ENCODE measurements at regions of chr17 and their contacts with region 1.

Region 1: GRCh38 chr17:73255671-73256181 is 6.0 kb downstream of the CPSF4L start:
- DNase-seq: peak; percentile 51
- H3K4me3 ChIP-seq: no peak overlapping the region
- H3K27ac ChIP-seq: no peak overlapping the region
- H3K4me1 ChIP-seq: no peaks in the 10 kb centered on the region
- H3K27me3 ChIP-seq: no peaks in the 10 kb centered on the region
- CTCF ChIP-seq: peak; percentile 98

Region 2: GRCh38 chr17:73156166-73156840 is 99.4 kb before region 1 on chr17:
- intact Hi-C with region 1: no loop called
- DNase-seq: peak; percentile 70
- H3K4me3 ChIP-seq: no peak overlapping the region
- H3K27ac ChIP-seq: no peak overlapping the region
- H3K4me1 ChIP-seq: no peaks in the 10 kb centered on the region
- H3K27me3 ChIP-seq: no peaks in the 10 kb centered on the region
- CTCF ChIP-seq: peak; percentile 68

Region 3: DNA sequence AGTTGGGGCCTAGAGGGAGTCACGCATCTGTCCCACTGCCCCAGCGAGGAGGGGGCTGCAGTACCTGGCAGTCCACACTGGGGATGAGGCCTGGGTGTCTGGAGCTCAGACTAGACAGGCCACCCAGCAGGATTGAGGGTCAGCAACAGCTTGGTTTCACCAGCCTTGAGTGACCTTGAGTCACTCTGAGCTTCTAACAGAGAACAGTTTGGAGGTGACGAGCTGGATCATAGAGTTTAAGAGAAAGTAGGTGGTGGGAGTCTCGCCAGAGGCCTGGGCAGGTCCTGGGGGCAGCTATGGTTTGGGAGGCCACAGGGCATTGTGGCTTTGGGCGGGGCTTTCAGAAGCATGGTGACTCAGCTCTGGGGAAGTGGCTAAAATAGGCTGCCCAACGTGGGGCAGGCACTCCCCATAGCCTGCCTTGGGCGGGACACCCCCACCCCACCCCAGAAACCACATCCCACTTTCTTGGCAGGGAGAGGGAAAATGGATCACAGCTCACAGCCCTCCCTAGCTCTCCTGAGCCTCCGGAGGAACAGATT is 35.6 kb after region 1 on chr17:
- intact Hi-C with region 1: no loop called
- DNase-seq: peak; percentile 73
- H3K4me3 ChIP-seq: no peak overlapping the region
- H3K27ac ChIP-seq: peak overlapping the region; percentile 82
- H3K4me1 ChIP-seq: peaks cover 34% of the 10 kb centered on the region
- H3K27me3 ChIP-seq: no peaks in the 10 kb centered on the region
- CTCF ChIP-seq: no peak

Region 4: DNA sequence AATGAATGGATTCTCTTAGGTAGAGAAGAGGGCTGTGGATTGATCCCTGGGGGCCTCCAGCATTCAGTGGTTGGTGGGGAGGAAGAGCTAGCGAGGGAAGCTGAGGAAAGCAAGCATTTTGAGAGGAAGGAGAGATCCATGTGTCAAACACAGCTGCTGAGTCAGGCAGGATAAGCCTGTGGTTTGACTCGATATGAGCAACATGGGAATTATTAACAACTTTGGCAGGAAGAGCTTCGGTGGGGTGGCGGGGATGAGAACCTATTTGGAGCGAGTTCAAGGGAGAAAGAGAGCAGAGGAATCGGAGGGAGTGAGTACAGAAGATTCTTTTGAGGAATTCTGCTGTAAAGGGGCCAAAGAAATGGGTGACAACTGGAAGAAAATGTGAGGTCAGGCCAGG is 115.6 kb after region 1 on chr17:
- intact Hi-C with region 1: loop called (anchors 1 kb)
- DNase-seq: no peak
- H3K4me3 ChIP-seq: no peak overlapping the region
- H3K27ac ChIP-seq: no peak overlapping the region
- H3K4me1 ChIP-seq: no peaks in the 10 kb centered on the region
- H3K27me3 ChIP-seq: no peaks in the 10 kb centered on the region
- CTCF ChIP-seq: no peak